ENCODE measurements at regions of chr6 and their contacts with region 1.

Region 1: GRCh38 chr6:53794720-53795253 is at the start of gene LRRC1:
- DNase-seq: peak; percentile 82
- H3K4me3 Mint-ChIP-seq: peak within 1 kb of the TSS; percentile 95
- H3K27ac Mint-ChIP-seq: peak within 1 kb of the TSS; percentile 62
- H3K4me1 Mint-ChIP-seq: peaks cover 10% of the 10 kb centered on the region
- H3K27me3 Mint-ChIP-seq: peaks cover 19% of the 10 kb centered on the region
- total RNA-seq, gene LRRC1: 2.3 to 2.9 TPM

Region 2: DNA sequence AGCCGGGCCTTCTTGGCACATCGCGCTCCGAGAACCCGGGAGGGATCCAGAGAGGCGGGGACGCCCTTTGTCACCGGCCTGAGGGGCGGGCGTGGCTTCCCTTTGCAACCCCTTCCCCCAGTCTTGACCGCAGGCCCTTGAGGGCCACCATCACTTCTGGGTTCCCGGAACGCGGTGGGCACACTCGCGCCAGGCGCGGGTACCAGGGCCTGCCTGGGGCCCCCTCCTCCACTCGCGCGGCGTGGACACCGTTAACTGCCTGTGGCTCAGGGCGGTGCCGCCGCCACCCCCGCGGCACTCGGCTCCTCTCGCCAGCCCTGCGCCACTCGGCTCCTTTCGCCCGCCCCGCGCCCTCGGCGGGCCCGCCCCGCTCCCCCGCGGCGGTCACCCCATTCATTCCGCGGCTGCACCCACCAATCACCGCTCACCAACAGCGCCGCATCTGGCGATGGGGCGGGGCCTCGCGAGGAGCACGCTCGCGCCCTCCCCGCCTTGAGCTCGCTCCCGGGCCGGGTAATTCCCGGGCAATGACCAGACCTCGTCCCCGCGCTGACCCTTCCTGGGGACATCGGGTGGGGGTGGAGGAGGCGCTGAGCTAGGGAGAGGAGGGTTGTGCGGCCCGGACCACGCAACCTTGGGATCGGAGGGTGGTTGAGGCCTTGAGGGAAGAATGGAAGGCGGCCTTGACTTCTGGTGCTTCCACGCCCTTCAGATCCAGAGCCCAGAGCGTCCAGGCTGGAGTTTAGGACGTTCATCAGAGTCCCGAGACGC is 435.5 kb before region 1 on chr6:
- CTCF ChIA-PET with region 1: no interaction called
- intact Hi-C with region 1: loop called (anchors 10 kb)
- DNase-seq: peak; percentile 94
- H3K4me3 Mint-ChIP-seq: peak overlapping the region; percentile 90
- H3K27ac Mint-ChIP-seq: peak overlapping the region; percentile 96
- H3K4me1 Mint-ChIP-seq: peaks cover 39% of the 10 kb centered on the region
- H3K27me3 Mint-ChIP-seq: no peaks in the 10 kb centered on the region

Region 3: GRCh38 chr6:53651764-53652401 is 142.9 kb before region 1 on chr6:
- CTCF ChIA-PET with region 1: no interaction called
- intact Hi-C with region 1: loop called (anchors 2 kb)
- DNase-seq: peak; percentile 81
- H3K4me3 Mint-ChIP-seq: peak overlapping the region; percentile 85
- H3K27ac Mint-ChIP-seq: peak overlapping the region; percentile 46
- H3K4me1 Mint-ChIP-seq: peaks cover 26% of the 10 kb centered on the region
- H3K27me3 Mint-ChIP-seq: no peaks in the 10 kb centered on the region

Region 4: DNA sequence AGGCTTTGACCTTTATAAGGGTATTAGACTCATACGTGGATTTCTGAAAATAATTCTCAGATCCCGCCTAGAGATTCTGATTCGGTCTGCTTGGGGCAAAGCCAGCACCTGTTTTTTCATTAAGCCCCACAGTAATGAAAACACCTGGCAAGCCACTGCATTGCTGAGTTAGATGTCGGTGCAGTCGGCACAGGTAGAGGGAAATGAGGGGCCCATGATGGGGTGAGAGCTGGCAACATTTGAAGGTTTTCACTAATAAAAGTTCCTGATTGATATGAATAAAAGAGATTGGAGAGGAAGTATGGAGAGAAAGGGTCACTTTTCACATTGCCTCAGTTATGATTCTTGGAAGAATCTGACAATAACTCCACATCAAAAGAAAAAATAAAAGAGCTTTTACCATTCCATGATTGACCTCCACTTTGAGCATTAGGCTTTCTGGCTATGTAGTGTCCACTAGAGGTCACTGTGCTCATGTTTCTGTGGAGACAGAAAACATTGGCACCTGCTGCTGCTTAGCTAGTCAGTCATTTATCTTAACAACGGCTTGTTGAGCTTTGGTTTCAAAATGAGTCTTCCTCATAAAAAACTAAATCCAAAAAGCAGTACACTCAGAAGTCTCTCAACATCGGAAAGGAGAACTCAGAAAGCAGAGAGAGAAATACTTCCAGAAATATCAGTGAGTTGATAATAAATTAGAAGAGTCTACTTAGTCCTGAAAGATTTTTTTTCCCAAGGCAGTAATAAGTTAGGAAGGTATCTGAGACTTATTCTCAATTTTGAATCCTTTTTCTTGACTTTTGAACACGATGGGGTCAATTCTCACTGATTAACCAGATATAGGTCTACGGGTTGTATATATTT is 76.0 kb before region 1 on chr6:
- CTCF ChIA-PET with region 1: interaction called, 5 read pairs
- intact Hi-C with region 1: loop called (anchors 2 kb)
- DNase-seq: peak; percentile 46
- H3K4me3 Mint-ChIP-seq: no peak overlapping the region
- H3K27ac Mint-ChIP-seq: no peak overlapping the region
- H3K4me1 Mint-ChIP-seq: peaks cover 7% of the 10 kb centered on the region
- H3K27me3 Mint-ChIP-seq: peaks cover 8% of the 10 kb centered on the region

Region 5: GRCh38 chr6:53938810-53939209 is 144.0 kb after region 1 on chr6:
- CTCF ChIA-PET with region 1: interaction called, 3 read pairs
- intact Hi-C with region 1: loop called (anchors 5 kb)
- DNase-seq: no peak
- H3K4me3 Mint-ChIP-seq: no peak overlapping the region
- H3K27ac Mint-ChIP-seq: no peak overlapping the region
- H3K4me1 Mint-ChIP-seq: peaks cover 7% of the 10 kb centered on the region
- H3K27me3 Mint-ChIP-seq: peaks cover 13% of the 10 kb centered on the region

Region 6: GRCh38 chr6:53956068-53956711 is 161.4 kb after region 1 on chr6:
- CTCF ChIA-PET with region 1: interaction called, 4 read pairs
- intact Hi-C with region 1: loop called (anchors 1 kb)
- DNase-seq: peak; percentile 46
- H3K4me3 Mint-ChIP-seq: no peak overlapping the region
- H3K27ac Mint-ChIP-seq: no peak overlapping the region
- H3K4me1 Mint-ChIP-seq: no peaks in the 10 kb centered on the region
- H3K27me3 Mint-ChIP-seq: peaks cover 2% of the 10 kb centered on the region